Activated CD4-positive, alpha-beta T cell treated with anti-CD3 and anti-CD28 coated beads, Interleukin-2, amount 10 ng/mL, durations not matched to agents 7 days and 5 days (primary cell): ENCODE measurements at regions of chr9 and their contacts with region 1.

Region 1: GRCh38 chr9:119337573-119337972 is 31.7 kb downstream of the BRINP1 start:
- DNase-seq: no peak
- H3K4me3 Mint-ChIP-seq: no peak overlapping the region
- H3K27ac Mint-ChIP-seq: no peak overlapping the region
- H3K4me1 Mint-ChIP-seq: no peaks in the 10 kb centered on the region
- H3K27me3 Mint-ChIP-seq: no peaks in the 10 kb centered on the region

Region 2: GRCh38 chr9:119273984-119274665 is 63.4 kb before region 1 on chr9:
- CTCF ChIA-PET with region 1: no interaction called
- POLR2A ChIA-PET with region 1: interaction called, 10 read pairs
- DNase-seq: no peak
- H3K4me3 Mint-ChIP-seq: no peak overlapping the region
- H3K27ac Mint-ChIP-seq: no peak overlapping the region
- H3K4me1 Mint-ChIP-seq: no peaks in the 10 kb centered on the region
- H3K27me3 Mint-ChIP-seq: no peaks in the 10 kb centered on the region